A549 (cell line): ENCODE measurements at regions of chr1 and their contacts with region 1.

Region 1: DNA sequence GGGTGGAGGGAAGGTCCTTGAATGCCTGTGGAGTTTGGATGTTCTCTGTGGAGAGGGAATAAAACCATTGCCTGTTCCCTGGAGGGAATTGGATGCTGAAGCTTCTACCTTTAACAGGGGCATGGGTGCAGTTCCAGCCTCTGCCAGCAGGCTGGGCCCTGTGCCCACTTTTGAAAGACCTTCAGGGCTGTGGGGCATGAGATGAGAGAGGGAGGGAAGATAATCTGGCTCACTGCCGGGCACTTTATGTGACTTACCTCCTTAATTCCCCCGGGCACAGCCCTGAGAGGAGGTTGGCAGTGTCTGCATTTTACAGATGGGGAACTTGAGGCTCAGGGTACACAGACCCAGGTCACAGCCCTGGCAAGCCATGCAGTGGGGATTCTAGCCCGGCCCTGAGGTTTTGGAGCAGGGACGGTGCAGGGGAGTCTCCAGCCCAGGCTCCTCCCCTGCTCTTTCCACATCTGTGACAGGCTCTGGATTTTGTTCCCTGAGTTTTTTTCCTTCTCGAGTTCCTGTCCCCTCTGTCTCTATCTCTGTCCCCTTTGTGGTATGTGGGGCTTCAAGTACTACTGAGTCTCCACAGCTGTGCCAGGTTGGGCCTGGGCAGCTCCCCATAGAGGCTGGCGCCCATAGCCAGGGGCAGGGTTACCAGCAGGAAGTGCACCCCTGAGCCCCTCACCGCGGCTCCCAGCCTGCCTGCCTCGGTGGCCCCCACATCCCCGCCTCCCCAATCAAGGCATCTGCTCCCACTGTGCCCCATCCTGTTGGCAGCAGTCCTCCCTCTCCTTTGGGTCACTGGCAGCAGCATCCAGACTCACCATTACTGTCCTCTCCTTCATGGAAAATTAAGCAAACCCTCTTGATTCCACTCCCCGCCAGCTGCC is 14.0 kb upstream of the THEMIS2 start:
- DNase-seq: peak; percentile 60 to 69
- ATAC-seq: peak; percentile 89 to 94
- H3K4me3 ChIP-seq: no peak overlapping the region
- H3K27ac ChIP-seq: peak overlapping the region in 1 of 2 experiments; percentile 24; a peak in 1 of 6 replicates
- H3K4me1 ChIP-seq: 0 out of 3 replicates have a peak, but pooled peaks cover under 1% of the 10 kb centered on the region
- CTCF ChIP-seq: peak; percentile 80
- EP300 ChIP-seq: no peak
- POLR2A ChIP-seq: no peak
- RAD21 ChIP-seq: peak; percentile 89 to 92

Region 2: GRCh38 chr1:27823026-27823425 is 35.3 kb before region 1 on chr1:
- CTCF ChIA-PET with region 1: no interaction called
- POLR2A ChIA-PET with region 1: no interaction called
- DNase-seq: no peak
- ATAC-seq: no peak
- H3K4me3 ChIP-seq: no peak overlapping the region
- H3K27ac ChIP-seq: no peak overlapping the region
- H3K4me1 ChIP-seq: no peaks in the 10 kb centered on the region
- CTCF ChIP-seq: no peak
- EP300 ChIP-seq: no peak
- POLR2A ChIP-seq: no peak
- RAD21 ChIP-seq: no peak

Region 3: DNA sequence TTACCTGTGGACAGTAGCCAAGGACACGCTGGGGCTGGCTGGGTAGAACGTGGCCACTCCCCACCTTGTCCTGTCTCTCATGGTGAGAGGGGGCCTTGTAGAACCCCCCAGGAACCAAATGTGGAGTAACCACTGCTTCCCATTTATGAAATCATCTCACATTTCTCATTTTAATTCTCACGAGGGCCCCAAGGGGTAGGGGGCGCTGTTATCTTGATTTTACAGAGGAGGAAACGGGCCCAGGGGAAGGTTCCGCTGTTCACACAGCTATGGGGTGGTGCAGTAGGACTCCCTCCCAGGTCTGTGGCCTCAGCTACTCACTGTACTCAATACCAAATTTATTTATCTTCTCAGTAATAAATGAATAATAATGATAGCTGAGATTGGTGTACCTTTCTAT is 82.0 kb after region 1 on chr1:
- CTCF ChIA-PET with region 1: interaction called, 10 read pairs
- POLR2A ChIA-PET with region 1: no interaction called
- DNase-seq: peak; percentile 20 to 22
- ATAC-seq: peak in 1 of 2 experiments; percentile 71; a peak in 3 of 6 replicates
- H3K4me3 ChIP-seq: no peak overlapping the region
- H3K27ac ChIP-seq: no peak overlapping the region
- H3K4me1 ChIP-seq: no peaks in the 10 kb centered on the region
- CTCF ChIP-seq: peak; percentile 37; the same call in 2 of the 3 replicates
- EP300 ChIP-seq: no peak
- POLR2A ChIP-seq: no peak
- RAD21 ChIP-seq: peak in 1 of 2 experiments; percentile 37; a peak in 2 of 5 replicates

Region 4: GRCh38 chr1:27979151-27979858 is 121.0 kb after region 1 on chr1:
- CTCF ChIA-PET with region 1: interaction called, 126 read pairs
- POLR2A ChIA-PET with region 1: no interaction called
- DNase-seq: peak; percentile 16 to 65
- ATAC-seq: peak; percentile 74 to 85
- H3K4me3 ChIP-seq: no peak overlapping the region
- H3K27ac ChIP-seq: peak overlapping the region in 1 of 2 experiments; percentile 22; a peak in 1 of 6 replicates
- H3K4me1 ChIP-seq: peaks cover 7% of the 10 kb centered on the region; the same call in 2 of the 3 replicates
- CTCF ChIP-seq: peak; percentile 60
- EP300 ChIP-seq: no peak
- POLR2A ChIP-seq: no peak
- RAD21 ChIP-seq: peak; percentile 63 to 69; a peak in 4 of 5 replicates

Region 5: DNA sequence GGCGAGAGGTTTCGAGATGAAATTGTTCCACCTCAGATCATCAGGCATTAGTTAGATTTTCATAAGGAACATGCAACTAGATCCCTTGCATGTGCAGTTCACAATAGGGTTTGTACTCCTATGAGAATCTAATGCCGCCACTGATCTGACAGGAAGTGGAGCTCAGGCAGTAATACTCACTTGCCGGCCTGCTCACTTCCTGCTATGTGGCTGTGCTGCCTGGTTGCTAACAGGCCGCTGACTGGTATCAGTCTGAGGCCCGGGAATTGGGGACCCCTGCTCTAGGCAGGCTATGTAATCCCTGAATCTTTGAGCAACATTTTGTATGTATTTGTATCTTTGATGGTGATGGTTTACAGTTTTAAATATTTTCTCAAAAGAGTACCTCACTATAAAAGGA is 134.0 kb after region 1 on chr1:
- CTCF ChIA-PET with region 1: interaction called, 11 read pairs
- POLR2A ChIA-PET with region 1: no interaction called
- DNase-seq: no peak
- ATAC-seq: no peak
- H3K4me3 ChIP-seq: no peak overlapping the region
- H3K27ac ChIP-seq: no peak overlapping the region
- H3K4me1 ChIP-seq: no peaks in the 10 kb centered on the region
- CTCF ChIP-seq: no peak
- EP300 ChIP-seq: no peak
- POLR2A ChIP-seq: no peak
- RAD21 ChIP-seq: no peak

Region 6: GRCh38 chr1:28933277-28933676 is 1075.0 kb after region 1 on chr1:
- CTCF ChIA-PET with region 1: no interaction called
- POLR2A ChIA-PET with region 1: no interaction called
- DNase-seq: no peak
- ATAC-seq: no peak
- H3K4me3 ChIP-seq: no peak overlapping the region
- H3K27ac ChIP-seq: no peak overlapping the region
- H3K4me1 ChIP-seq: peaks cover 4% of the 10 kb centered on the region; the same call in 2 of the 3 replicates
- CTCF ChIP-seq: no peak
- EP300 ChIP-seq: no peak
- POLR2A ChIP-seq: no peak
- RAD21 ChIP-seq: no peak